CD4-positive, alpha-beta memory T cell (primary cell): ENCODE measurements at regions of chr3 and their contacts with region 1.

Region 1: DNA sequence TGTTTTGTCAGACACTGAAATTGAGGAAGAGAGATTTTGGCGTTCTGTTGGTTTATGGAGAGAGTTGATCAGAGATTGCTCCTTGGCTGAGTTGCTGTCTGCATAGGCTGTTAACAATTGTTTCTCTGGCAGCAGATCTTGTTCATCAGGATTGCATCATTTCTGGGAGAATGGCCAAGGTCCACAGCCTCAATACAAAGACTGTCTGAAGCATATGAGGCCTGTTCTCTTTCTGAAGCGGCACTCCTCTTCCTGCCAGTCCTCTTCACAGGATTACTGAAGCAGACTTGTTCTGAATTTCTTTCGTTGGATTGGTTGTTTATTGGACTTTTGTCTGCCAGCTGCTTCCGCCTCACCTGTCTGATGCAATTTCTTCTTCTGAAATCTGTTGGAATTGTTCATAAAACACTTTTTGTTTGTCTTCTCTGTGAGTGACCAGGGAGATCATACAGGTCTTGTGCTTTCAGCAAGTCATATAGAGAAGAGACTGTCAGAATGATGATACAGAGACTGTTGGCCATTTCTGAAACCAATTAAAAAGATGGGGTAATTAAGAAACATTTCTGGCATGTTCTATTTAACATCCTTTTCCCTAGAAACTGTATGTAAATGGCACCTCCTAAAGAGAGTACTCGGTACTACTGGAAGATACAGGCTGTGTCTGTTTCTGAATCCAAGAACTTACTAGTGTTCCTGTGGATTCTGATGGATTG is 25.5 kb downstream of the SETD5 start:
- DNase-seq: peak; percentile 31 to 46 (median 35)
- H3K4me3 ChIP-seq: no peak overlapping the region
- H3K4me3 Mint-ChIP-seq: peak overlapping the region in 2 of 8 donors; percentile 0 to 59
- H3K27ac ChIP-seq: peak overlapping the region; percentile 1
- H3K27ac Mint-ChIP-seq: peak overlapping the region; percentile 33 to 93 (median 74)
- H3K4me1 ChIP-seq: peaks cover 22% of the 10 kb centered on the region
- H3K4me1 Mint-ChIP-seq: peaks cover 26 to 37% (median 34%) of the 10 kb centered on the region in 4 donors
- H3K27me3 ChIP-seq: no peaks in the 10 kb centered on the region
- H3K27me3 Mint-ChIP-seq: no peaks in the 10 kb centered on the region

Region 2: GRCh38 chr3:8970971-8971589 is 451.8 kb before region 1 on chr3:
- CTCF ChIA-PET with region 1: no interaction called
- POLR2A ChIA-PET with region 1: no interaction called
- intact Hi-C with region 1: loop called (anchors 1 kb)
- DNase-seq: peak; percentile 68 to 78 (median 73)
- H3K4me3 ChIP-seq: no peak overlapping the region
- H3K4me3 Mint-ChIP-seq: peak overlapping the region in 3 of 8 donors; percentile 40 to 58 (median 41)
- H3K27ac ChIP-seq: no peak overlapping the region
- H3K27ac Mint-ChIP-seq: no peak overlapping the region
- H3K4me1 ChIP-seq: no peaks in the 10 kb centered on the region
- H3K4me1 Mint-ChIP-seq: peaks cover 2 to 5% (median 4%) of the 10 kb centered on the region in 4 donors
- H3K27me3 ChIP-seq: no peaks in the 10 kb centered on the region
- H3K27me3 Mint-ChIP-seq: peaks cover 8 to 12% of the 10 kb centered on the region in 2 donors

Region 3: GRCh38 chr3:9352917-9353752 is 69.7 kb before region 1 on chr3:
- CTCF ChIA-PET with region 1: interaction called, 19 read pairs
- POLR2A ChIA-PET with region 1: no interaction called
- intact Hi-C with region 1: loop called (anchors 1 kb)
- DNase-seq: peak; percentile 45 to 61 (median 55)
- H3K4me3 ChIP-seq: no peak overlapping the region
- H3K4me3 Mint-ChIP-seq: no peak overlapping the region
- H3K27ac ChIP-seq: no peak overlapping the region
- H3K27ac Mint-ChIP-seq: peak overlapping the region in 1 of 7 donors; percentile 26
- H3K4me1 ChIP-seq: no peaks in the 10 kb centered on the region
- H3K4me1 Mint-ChIP-seq: peaks cover 10 to 16% (median 13%) of the 10 kb centered on the region in 4 donors
- H3K27me3 ChIP-seq: no peaks in the 10 kb centered on the region
- H3K27me3 Mint-ChIP-seq: no peaks in the 10 kb centered on the region

Region 4: DNA sequence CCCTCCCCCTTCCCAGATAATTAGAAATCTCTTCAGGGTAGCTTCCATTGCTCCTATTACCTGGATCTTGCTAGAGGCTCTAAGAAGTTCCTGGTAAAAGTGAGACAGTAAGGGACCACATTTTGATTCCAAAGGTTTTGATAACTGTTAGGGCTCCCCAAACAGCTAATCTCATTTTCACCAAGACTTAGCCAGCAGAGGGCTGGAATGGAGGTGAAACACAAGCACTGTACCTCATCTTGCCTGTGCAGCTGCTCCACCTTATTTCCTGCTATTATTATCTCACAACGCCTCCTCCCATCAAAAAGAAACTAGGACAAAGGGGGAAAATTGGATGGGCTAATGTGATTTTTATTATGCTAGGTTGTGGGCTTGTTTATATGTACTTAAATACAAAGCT is 18.2 kb before region 1 on chr3:
- CTCF ChIA-PET with region 1: interaction called, 6 read pairs
- POLR2A ChIA-PET with region 1: interaction called, 4 read pairs
- intact Hi-C with region 1: loop called (anchors 2 kb)
- DNase-seq: peak in 2 of 5 donors; percentile 10 to 26
- H3K4me3 ChIP-seq: no peak overlapping the region
- H3K4me3 Mint-ChIP-seq: peak overlapping the region in 4 of 8 donors; percentile 55 to 86 (median 60)
- H3K27ac ChIP-seq: no peak overlapping the region
- H3K27ac Mint-ChIP-seq: peak overlapping the region; percentile 9 to 86 (median 67)
- H3K4me1 ChIP-seq: peaks cover 94% of the 10 kb centered on the region
- H3K4me1 Mint-ChIP-seq: peaks cover 58 to 94% (median 76%) of the 10 kb centered on the region in 4 donors
- H3K27me3 ChIP-seq: no peaks in the 10 kb centered on the region
- H3K27me3 Mint-ChIP-seq: no peaks in the 10 kb centered on the region